Caco-2 (cell line): ENCODE measurements at regions of chr6 and their contacts with region 1.

Region 1: DNA sequence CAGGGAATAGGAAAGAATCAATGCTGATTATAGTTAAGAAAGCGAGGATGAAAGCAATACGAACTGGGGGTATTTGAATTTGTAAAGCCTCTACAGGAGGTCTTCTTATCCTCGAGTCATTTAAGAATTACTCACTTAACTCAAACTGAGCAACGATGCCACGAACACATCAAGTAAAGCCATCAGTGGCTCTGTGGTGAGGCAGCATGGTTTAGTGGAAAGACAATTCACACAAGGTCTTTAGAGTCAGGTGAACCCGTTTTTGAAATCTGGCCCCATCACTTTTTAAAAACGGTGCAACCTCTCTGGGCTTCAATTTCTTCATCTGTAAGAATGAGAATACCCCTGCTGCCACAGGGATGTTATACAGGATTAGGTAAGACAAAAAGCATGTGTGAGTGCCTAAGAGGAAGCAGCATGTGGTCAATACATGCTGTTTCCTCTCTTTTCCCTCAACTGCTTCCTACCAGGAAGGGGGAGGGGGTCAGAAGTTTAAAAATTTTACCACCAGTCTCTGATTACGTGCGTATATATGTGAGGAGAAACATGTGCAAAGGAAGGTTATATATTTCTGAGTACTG is 162.0 kb downstream of the BTBD9 start:
- DNase-seq: no peak
- H3K4me3 ChIP-seq: no peak overlapping the region
- H3K4me3 Mint-ChIP-seq: no peak overlapping the region
- H3K27ac Mint-ChIP-seq: no peak overlapping the region
- H3K4me1 ChIP-seq: no peaks in the 10 kb centered on the region
- H3K4me1 Mint-ChIP-seq: no peaks in the 10 kb centered on the region
- H3K27me3 ChIP-seq: no peaks in the 10 kb centered on the region
- H3K27me3 Mint-ChIP-seq: no peaks in the 10 kb centered on the region
- CTCF ChIP-seq: no peak

Region 2: GRCh38 chr6:38234934-38235682 is 242.7 kb before region 1 on chr6:
- CTCF ChIA-PET with region 1: no interaction called
- POLR2A ChIA-PET with region 1: no interaction called
- intact Hi-C with region 1: no loop called
- DNase-seq: no peak
- H3K4me3 ChIP-seq: no peak overlapping the region
- H3K4me3 Mint-ChIP-seq: no peak overlapping the region
- H3K27ac Mint-ChIP-seq: no peak overlapping the region
- H3K4me1 ChIP-seq: no peaks in the 10 kb centered on the region
- H3K4me1 Mint-ChIP-seq: no peaks in the 10 kb centered on the region
- H3K27me3 ChIP-seq: no peaks in the 10 kb centered on the region
- H3K27me3 Mint-ChIP-seq: no peaks in the 10 kb centered on the region
- CTCF ChIP-seq: no peak

Region 3: GRCh38 chr6:38307740-38308139 is 170.0 kb before region 1 on chr6:
- CTCF ChIA-PET with region 1: no interaction called
- POLR2A ChIA-PET with region 1: no interaction called
- intact Hi-C with region 1: no loop called
- DNase-seq: no peak
- H3K4me3 ChIP-seq: no peak overlapping the region
- H3K4me3 Mint-ChIP-seq: no peak overlapping the region
- H3K27ac Mint-ChIP-seq: no peak overlapping the region
- H3K4me1 ChIP-seq: 0 out of 2 replicates have a peak, but pooled peaks cover 7% of the 10 kb centered on the region
- H3K4me1 Mint-ChIP-seq: no peaks in the 10 kb centered on the region
- H3K27me3 ChIP-seq: no peaks in the 10 kb centered on the region
- H3K27me3 Mint-ChIP-seq: no peaks in the 10 kb centered on the region
- CTCF ChIP-seq: no peak

Region 4: DNA sequence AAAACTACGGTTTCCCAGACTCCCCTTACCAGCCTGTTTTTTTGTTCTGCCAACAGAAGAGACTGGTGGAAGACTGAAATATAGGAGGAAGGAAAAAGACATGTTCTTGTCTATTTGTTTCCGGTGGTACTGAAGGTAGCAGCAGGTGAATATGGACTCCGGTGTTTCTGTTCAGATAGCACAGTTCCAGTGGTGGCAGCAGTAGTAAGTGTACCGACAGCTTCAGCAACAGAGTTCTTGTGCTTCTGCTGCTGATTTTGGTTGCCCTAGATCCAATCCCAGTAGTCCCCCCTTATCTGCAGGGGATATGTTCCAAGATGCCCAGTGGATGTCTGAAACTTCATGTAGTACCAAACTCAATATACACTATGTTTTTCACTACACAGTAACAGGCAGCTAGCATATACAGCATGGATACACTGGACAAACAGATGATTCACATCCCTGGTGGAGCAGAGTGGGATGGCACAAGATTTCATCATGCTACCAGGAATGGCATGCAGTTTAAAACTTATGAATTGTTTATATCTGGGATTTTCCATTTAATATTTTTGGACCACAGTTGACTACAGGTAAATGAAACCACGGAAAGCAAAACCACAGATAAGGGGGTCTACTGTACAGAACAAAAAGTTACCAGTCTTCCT is 139.8 kb before region 1 on chr6:
- CTCF ChIA-PET with region 1: no interaction called
- POLR2A ChIA-PET with region 1: no interaction called
- intact Hi-C with region 1: no loop called
- DNase-seq: peak in 1 of 2 experiments; percentile 37
- H3K4me3 ChIP-seq: no peak overlapping the region
- H3K4me3 Mint-ChIP-seq: no peak overlapping the region
- H3K27ac Mint-ChIP-seq: peak overlapping the region; percentile 62
- H3K4me1 ChIP-seq: no peaks in the 10 kb centered on the region
- H3K4me1 Mint-ChIP-seq: no peaks in the 10 kb centered on the region
- H3K27me3 ChIP-seq: no peaks in the 10 kb centered on the region
- H3K27me3 Mint-ChIP-seq: no peaks in the 10 kb centered on the region
- CTCF ChIP-seq: no peak

Region 5: GRCh38 chr6:38443352-38444146 is 34.2 kb before region 1 on chr6:
- CTCF ChIA-PET with region 1: no interaction called
- POLR2A ChIA-PET with region 1: no interaction called
- intact Hi-C with region 1: loop called (anchors 1 kb)
- DNase-seq: no peak
- H3K4me3 ChIP-seq: no peak overlapping the region
- H3K4me3 Mint-ChIP-seq: no peak overlapping the region
- H3K27ac Mint-ChIP-seq: no peak overlapping the region
- H3K4me1 ChIP-seq: no peaks in the 10 kb centered on the region
- H3K4me1 Mint-ChIP-seq: no peaks in the 10 kb centered on the region
- H3K27me3 ChIP-seq: no peaks in the 10 kb centered on the region; the same call in 1 of the 2 replicates
- H3K27me3 Mint-ChIP-seq: no peaks in the 10 kb centered on the region
- CTCF ChIP-seq: no peak